HCT116 (cell line): ENCODE measurements at regions of chr12 and their contacts with region 1.

Region 1: GRCh38 chr12:4763549-4763948 is 43.3 kb downstream of the GALNT8 start:
- DNase-seq: peak; percentile 45
- ATAC-seq: peak; percentile 97
- H3K4me3 ChIP-seq: no peak overlapping the region
- H3K27ac ChIP-seq: no peak overlapping the region
- H3K4me1 ChIP-seq: no peaks in the 10 kb centered on the region
- H3K27me3 ChIP-seq: peaks cover 28% of the 10 kb centered on the region
- CTCF ChIP-seq: peak in 2 of 3 experiments; percentile 55 to 57; a peak in 4 of 6 replicates
- POLR2A ChIP-seq: no peak
- RAD21 ChIP-seq: peak; percentile 21; the same call in 1 of the 2 replicates

Region 2: GRCh38 chr12:4307593-4308333 is 455.8 kb before region 1 on chr12:
- CTCF ChIA-PET with region 1: no interaction called
- POLR2A ChIA-PET with region 1: no interaction called
- RAD21 ChIA-PET with region 1: no interaction called
- intact Hi-C with region 1: loop called (anchors 5 kb)
- DNase-seq: peak; percentile 77
- ATAC-seq: peak; percentile 97
- H3K4me3 ChIP-seq: peak overlapping the region; percentile 15 to 39
- H3K27ac ChIP-seq: peak overlapping the region; percentile 39; the same call in 1 of the 2 replicates
- H3K4me1 ChIP-seq: peaks cover 8 to 19% of the 10 kb centered on the region in 2 experiments
- H3K27me3 ChIP-seq: peaks cover 20% of the 10 kb centered on the region
- CTCF ChIP-seq: peak; percentile 72 to 83 (median 79)
- POLR2A ChIP-seq: no peak
- RAD21 ChIP-seq: peak; percentile 83

Region 3: DNA sequence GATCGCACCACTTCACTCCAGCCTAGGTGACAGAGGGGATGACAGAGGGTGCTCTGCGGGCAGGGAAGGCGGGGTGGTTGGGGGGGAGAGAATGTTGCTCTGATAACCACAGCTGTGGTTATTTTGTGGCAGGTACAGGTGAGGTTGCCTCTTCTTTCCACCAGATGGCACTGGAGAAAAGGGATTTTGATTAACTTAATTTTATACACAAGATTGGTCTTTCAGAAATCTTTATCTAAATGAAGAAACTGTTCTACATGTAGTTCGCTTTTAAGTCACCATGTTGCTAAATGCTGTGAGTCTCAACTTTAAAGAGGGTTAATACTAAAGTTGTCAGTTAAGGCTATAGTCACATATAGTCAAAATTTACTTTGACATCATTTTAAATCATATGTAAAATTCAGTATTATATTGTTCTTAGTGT is 409.8 kb before region 1 on chr12:
- CTCF ChIA-PET with region 1: no interaction called
- POLR2A ChIA-PET with region 1: no interaction called
- RAD21 ChIA-PET with region 1: no interaction called
- intact Hi-C with region 1: loop called (anchors 5 kb)
- DNase-seq: no peak
- ATAC-seq: peak; percentile 73; the same call in 1 of the 2 replicates
- H3K4me3 ChIP-seq: no peak overlapping the region
- H3K27ac ChIP-seq: no peak overlapping the region
- H3K4me1 ChIP-seq: no peaks in the 10 kb centered on the region
- H3K27me3 ChIP-seq: no peaks in the 10 kb centered on the region
- CTCF ChIP-seq: peak in 2 of 3 experiments; percentile 59 to 62; a peak in 4 of 6 replicates
- POLR2A ChIP-seq: no peak
- RAD21 ChIP-seq: peak; percentile 50

Region 4: DNA sequence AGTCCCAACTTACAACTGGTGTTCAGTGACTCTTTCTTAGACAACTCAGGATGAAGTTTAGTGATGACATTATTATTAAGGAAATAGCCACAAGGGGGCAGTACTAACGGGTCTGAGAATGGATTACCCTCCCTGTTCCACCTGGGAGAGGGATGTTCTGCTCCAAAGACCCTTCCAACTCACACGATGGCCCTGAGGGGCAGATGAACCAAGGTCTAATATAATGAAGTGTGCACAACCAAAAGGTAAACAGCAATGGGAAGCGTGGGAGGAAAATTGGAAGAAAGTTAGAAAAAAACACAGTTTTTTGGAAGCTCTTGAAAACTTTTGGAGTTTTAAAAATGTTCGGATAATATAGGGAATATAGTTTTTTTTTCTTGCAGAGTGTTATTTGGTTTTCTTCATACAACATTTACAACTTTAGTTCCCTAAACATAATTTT is 341.9 kb before region 1 on chr12:
- CTCF ChIA-PET with region 1: no interaction called
- POLR2A ChIA-PET with region 1: no interaction called
- RAD21 ChIA-PET with region 1: no interaction called
- intact Hi-C with region 1: loop called (anchors 2 kb)
- DNase-seq: peak; percentile 27
- ATAC-seq: peak; percentile 82
- H3K4me3 ChIP-seq: no peak overlapping the region
- H3K27ac ChIP-seq: no peak overlapping the region
- H3K4me1 ChIP-seq: no peaks in the 10 kb centered on the region
- H3K27me3 ChIP-seq: peaks cover 21% of the 10 kb centered on the region
- CTCF ChIP-seq: peak; percentile 43 to 76 (median 48); a peak in 5 of 6 replicates
- POLR2A ChIP-seq: no peak
- RAD21 ChIP-seq: peak; percentile 45

Region 5: GRCh38 chr12:4604684-4605193 is 158.8 kb before region 1 on chr12:
- CTCF ChIA-PET with region 1: no interaction called
- POLR2A ChIA-PET with region 1: no interaction called
- RAD21 ChIA-PET with region 1: no interaction called
- intact Hi-C with region 1: loop called (anchors 10 kb)
- DNase-seq: peak; percentile 81
- ATAC-seq: peak; percentile 92
- H3K4me3 ChIP-seq: peak overlapping the region; percentile 83 to 89
- H3K27ac ChIP-seq: peak overlapping the region; percentile 34; the same call in 1 of the 2 replicates
- H3K4me1 ChIP-seq: peaks cover 2 to 9% of the 10 kb centered on the region in 2 experiments; a peak in 1 of 4 replicates
- H3K27me3 ChIP-seq: no peaks in the 10 kb centered on the region; the same call in 1 of the 2 replicates
- CTCF ChIP-seq: peak; percentile 44 to 98 (median 96); a peak in 5 of 6 replicates
- POLR2A ChIP-seq: peak; percentile 32
- RAD21 ChIP-seq: peak; percentile 38; the same call in 1 of the 2 replicates